B cell (primary cell): ENCODE measurements at regions of chr4 and their contacts with region 1.

Region 1: DNA sequence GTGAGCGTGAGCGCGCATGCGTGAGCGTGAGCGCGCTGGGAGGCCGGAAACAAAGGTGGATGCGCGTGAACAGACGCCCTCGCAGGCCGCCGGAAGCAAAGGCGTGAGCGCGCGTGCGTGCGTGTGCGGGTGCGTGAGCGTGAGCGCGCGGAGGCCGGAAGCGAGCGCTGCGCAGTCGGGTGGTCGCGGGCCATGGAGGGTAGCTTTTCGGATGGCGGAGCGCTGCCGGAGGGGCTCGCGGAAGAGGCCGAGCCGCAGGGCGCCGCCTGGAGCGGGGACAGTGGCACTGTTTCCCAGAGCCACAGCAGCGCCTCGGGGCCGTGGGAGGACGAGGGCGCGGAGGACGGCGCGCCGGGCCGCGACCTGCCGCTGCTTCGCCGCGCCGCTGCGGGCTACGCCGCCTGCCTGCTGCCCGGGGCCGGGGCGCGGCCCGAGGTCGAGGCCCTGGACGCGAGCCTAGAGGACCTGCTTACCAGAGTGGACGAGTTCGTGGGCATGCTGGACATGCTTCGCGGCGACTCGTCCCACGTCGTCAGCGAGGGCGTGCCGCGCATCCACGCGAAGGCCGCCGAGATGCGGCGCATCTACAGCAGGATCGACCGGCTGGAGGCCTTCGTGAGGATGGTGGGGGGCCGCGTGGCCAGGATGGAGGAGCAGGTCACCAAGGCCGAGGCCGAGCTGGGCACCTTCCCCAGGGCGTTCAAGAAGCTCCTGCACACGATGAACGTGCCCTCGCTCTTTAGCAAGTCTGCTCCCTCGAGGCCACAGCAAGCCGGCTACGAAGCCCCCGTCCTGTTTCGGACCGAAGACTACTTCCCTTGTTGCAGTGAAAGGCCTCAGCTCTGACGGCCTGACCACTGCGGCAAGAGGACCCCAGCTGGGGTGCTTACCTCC is at the start of gene BLOC1S4:
- DNase-seq: peak; percentile 97
- ATAC-seq: peak; percentile 83
- H3K4me3 ChIP-seq: peak within 1 kb of the TSS; percentile 67 to 82 (median 80)
- H3K4me3 Mint-ChIP-seq: peak within 1 kb of the TSS; percentile 99
- H3K27ac ChIP-seq: peak within 1 kb of the TSS; percentile 76 to 85
- H3K27ac Mint-ChIP-seq: peak within 1 kb of the TSS; percentile 100
- H3K4me1 ChIP-seq: peaks cover 21 to 33% of the 10 kb centered on the region in 2 donors
- H3K4me1 Mint-ChIP-seq: peaks cover 38% of the 10 kb centered on the region
- H3K27me3 ChIP-seq: no peaks in the 10 kb centered on the region
- H3K27me3 Mint-ChIP-seq: no peaks in the 10 kb centered on the region
- CTCF ChIP-seq: no peak
- total RNA-seq, gene BLOC1S4: 25.3 and 26.3 TPM in 2 replicates

Region 2: DNA sequence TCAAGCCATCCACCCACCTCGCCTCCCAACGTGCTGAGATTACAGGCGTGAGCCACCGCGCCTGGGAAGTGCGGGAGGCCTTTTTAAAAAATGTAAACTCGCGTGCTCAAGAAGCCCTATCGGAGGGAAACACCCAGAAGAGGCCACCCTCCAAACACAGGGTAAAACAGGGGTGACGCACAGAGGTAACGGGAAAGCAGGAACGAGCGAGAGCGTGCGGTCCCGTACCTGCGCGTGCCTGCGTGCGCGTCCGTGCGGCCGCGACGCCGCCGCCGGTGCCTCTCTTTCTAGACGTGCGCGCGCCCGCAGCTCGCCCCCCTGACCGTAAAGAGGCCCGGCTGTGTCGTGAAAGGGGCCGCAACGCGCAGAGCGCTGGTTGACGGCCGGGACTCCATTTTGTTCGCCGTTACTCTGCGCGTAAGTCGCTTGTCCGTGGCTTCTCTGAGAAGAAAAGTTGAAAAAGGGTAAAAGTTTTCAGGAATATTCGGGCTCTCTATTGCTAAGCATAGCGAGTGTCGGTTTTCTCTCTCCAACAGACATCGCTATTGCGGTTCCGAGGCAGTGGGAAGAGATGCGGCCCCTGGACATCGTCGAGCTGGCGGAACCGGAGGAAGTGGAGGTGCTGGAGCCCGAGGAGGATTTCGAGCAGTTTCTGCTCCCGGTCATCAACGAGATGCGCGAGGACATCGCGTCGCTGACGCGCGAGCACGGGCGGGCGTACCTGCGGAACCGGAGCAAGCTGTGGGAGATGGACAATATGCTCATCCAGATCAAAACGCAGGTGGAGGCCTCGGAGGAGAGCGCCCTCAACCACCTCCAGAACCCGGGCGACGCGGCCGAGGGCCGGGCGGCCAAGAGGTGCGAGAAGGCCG is 75.7 kb before region 1 on chr4 and contains the start of gene MRFAP1:
- CTCF ChIA-PET with region 1: interaction called, 4 read pairs
- POLR2A ChIA-PET with region 1: interaction called, 22 read pairs
- intact Hi-C with region 1: loop called (anchors 1 kb)
- DNase-seq: peak; percentile 97
- ATAC-seq: peak; percentile 87
- H3K4me3 ChIP-seq: peak within 1 kb of the TSS; percentile 83 to 99 (median 96)
- H3K4me3 Mint-ChIP-seq: peak within 1 kb of the TSS; percentile 99
- H3K27ac ChIP-seq: peak within 1 kb of the TSS; percentile 95 to 96
- H3K27ac Mint-ChIP-seq: peak within 1 kb of the TSS; percentile 98
- H3K4me1 ChIP-seq: peaks cover 17 to 25% of the 10 kb centered on the region in 2 donors
- H3K4me1 Mint-ChIP-seq: peaks cover 33% of the 10 kb centered on the region
- H3K27me3 ChIP-seq: no peaks in the 10 kb centered on the region
- H3K27me3 Mint-ChIP-seq: no peaks in the 10 kb centered on the region
- CTCF ChIP-seq: no peak
- total RNA-seq, gene MRFAP1: 100 and 113 TPM in 2 replicates

Region 3: DNA sequence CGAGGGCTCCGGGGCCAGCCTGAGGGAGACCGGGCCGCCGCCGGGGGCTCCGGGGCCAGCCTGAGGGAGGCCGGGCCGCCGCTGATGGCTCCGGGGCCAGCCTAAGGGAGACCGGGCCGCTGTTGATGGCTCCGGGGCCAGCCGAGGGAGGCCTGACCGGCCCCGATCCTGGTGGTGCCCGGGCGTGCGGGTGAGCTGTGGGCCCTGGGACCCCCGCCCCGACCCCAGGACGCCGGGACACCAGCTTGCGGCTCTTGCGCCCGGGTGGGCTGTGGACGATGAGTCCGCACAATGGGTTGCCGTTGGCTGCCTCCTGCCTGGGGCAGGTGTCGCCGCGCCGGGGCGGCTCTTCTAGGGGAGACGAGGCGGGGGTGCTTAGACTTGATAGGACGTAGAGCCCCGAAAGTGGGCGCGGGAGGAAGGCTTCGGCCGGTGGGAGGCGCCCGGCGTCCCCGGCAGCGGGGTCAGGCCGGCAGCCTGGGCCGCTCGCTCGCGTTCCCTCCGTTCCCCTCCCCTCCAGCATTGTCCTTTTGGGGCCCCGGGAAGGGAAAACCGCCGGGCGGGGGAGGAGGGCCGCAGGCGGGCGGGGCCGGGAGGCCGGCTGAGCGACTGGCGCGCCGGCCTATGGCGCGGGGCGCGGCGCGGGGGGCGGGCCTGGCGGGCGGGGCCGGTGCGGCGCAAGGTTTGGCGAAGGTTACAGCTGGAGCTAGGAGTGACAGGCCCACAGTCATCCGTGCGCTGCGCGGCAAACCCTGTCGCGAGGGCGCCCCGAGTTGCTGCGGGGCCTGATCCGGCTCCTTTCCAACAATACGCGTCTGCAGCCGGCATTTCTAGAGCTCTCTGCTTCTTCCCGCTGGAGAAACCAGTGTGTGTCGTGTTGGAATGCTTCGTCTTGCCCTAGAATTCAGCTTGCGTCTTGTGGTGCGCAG is 67.1 kb after region 1 on chr4:
- CTCF ChIA-PET with region 1: interaction called, 4 read pairs
- POLR2A ChIA-PET with region 1: no interaction called
- intact Hi-C with region 1: loop called (anchors 1 kb)
- DNase-seq: peak; percentile 92
- ATAC-seq: peak; percentile 62
- H3K4me3 ChIP-seq: peak overlapping the region; percentile 35 to 90 (median 80)
- H3K4me3 Mint-ChIP-seq: peak overlapping the region; percentile 87
- H3K27ac ChIP-seq: peak overlapping the region; percentile 88 to 97
- H3K27ac Mint-ChIP-seq: peak overlapping the region; percentile 87
- H3K4me1 ChIP-seq: peaks cover 11 to 13% of the 10 kb centered on the region in 2 donors
- H3K4me1 Mint-ChIP-seq: peaks cover 28% of the 10 kb centered on the region
- H3K27me3 ChIP-seq: no peaks in the 10 kb centered on the region
- H3K27me3 Mint-ChIP-seq: no peaks in the 10 kb centered on the region
- CTCF ChIP-seq: peak; percentile 7

Region 4: DNA sequence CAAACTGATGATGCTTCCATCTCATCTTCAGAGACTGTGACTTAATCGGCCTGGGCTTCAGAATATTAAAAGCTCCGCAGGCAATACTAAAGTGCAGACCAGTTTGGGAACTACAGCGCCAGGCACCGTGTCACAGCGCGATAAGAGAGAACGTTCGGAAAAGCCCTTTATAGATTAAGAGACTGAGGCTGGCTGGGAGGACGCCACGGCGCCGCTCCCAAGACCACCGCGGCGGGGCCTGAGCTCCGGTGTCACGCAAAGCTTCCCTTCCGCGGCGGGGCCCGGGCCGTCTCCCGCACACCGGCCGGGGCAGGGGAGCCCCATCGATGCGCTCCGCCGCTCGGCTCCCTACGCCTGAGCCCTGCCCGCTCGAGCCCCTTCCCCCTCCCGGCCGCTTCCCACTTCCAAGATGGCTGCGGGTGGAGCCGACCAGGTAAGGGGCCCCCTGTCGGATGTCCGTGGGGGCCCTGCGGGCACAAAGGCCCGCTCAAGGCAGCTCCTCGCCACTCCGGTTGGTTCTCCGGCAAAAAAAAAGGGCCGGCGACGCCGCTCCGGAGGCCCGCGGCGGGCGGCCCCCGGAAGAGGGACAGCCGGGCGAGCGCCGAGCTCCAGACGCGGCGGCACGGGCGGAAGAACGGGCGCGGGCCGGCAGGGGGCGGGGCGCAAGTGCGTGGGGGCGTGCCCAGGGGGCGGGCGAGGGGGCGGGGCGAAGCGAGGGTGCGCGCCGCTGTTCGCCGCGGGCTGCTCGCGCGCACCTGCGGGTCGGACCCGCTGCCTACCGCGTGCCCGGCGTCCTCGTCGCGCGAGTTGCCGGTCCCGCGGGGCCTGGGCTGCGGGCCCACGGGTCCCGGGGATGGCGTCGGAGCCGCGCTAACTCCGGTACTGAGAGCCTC is 193.1 kb after region 1 on chr4 and contains the start of gene TBC1D14:
- CTCF ChIA-PET with region 1: interaction called, 8 read pairs
- POLR2A ChIA-PET with region 1: interaction called, 10 read pairs
- intact Hi-C with region 1: loop called (anchors 10 kb)
- DNase-seq: peak; percentile 94
- ATAC-seq: peak; percentile 89
- H3K4me3 ChIP-seq: peak within 1 kb of the TSS; percentile 72 to 85 (median 78)
- H3K4me3 Mint-ChIP-seq: peak within 1 kb of the TSS; percentile 95
- H3K27ac ChIP-seq: peak within 1 kb of the TSS; percentile 93 to 97
- H3K27ac Mint-ChIP-seq: peak within 1 kb of the TSS; percentile 94
- H3K4me1 ChIP-seq: peaks cover 33 to 43% of the 10 kb centered on the region in 2 donors
- H3K4me1 Mint-ChIP-seq: peaks cover 38% of the 10 kb centered on the region
- H3K27me3 ChIP-seq: peaks cover 0 to 3% (median 0%) of the 10 kb centered on the region in 4 experiments
- H3K27me3 Mint-ChIP-seq: peaks cover 8% of the 10 kb centered on the region
- CTCF ChIP-seq: no peak
- total RNA-seq, gene TBC1D14: 42.0 and 44.1 TPM in 2 replicates

Region 5: GRCh38 chr4:7802093-7802726 is 1085.9 kb after region 1 on chr4:
- CTCF ChIA-PET with region 1: interaction called, 8 read pairs
- POLR2A ChIA-PET with region 1: no interaction called
- intact Hi-C with region 1: loop called (anchors 5 kb)
- DNase-seq: peak; percentile 69
- ATAC-seq: peak; percentile 87
- H3K4me3 ChIP-seq: no peak overlapping the region
- H3K4me3 Mint-ChIP-seq: no peak overlapping the region
- H3K27ac ChIP-seq: no peak overlapping the region
- H3K27ac Mint-ChIP-seq: no peak overlapping the region
- H3K4me1 ChIP-seq: no peaks in the 10 kb centered on the region
- H3K4me1 Mint-ChIP-seq: no peaks in the 10 kb centered on the region
- H3K27me3 ChIP-seq: peaks cover 0 to 5% (median 0%) of the 10 kb centered on the region in 4 experiments
- H3K27me3 Mint-ChIP-seq: peaks cover 20% of the 10 kb centered on the region
- CTCF ChIP-seq: peak; percentile 81